Psoas muscle (tissue), 8 donors: ENCODE measurements at regions of chr3 and their contacts with region 1.

Region 1: DNA sequence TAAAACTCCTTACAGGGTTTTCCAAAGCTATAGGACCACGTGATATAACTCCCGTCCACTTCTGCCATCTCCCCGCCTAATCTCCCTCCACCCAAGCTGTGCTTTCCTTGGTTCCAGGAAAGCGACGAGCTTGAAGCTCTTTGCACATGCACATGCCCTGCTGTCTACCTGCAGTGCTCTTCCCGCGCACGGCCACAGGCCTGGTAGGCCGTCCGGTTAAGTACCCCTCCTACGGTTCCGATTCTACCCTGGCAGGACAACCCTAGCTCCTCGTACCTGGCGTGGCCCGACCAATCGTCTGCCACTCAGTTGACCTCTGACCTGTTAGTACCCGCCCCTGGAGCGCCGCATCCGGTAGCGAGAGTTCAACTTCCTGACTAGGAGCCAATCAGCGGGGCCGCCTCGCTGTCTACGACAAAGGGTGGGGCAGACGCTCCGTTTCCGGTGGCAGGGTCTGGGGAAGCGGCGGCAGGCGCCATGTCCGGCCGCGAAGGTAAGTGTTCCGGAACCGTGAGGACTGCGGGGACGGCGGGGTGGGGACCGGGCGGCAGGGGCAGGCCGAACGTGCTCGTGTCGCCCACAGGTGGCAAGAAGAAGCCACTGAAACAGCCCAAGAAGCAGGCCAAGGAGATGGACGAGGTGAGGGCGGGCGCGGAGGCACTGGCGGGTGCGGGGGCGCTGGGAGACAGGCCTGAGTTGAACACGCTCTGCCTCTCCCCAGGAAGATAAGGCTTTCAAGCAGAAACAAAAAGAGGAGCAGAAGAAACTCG is at the starts of genes CCDC51 and TMA7:
- DNase-seq: peak; percentile 98 to 99
- ATAC-seq: peak; percentile 97 to 100 (median 98)
- H3K4me3 ChIP-seq: peak within 1 kb of the TSS; percentile 89
- H3K27ac ChIP-seq: peak within 1 kb of the TSS; percentile 92
- H3K4me1 ChIP-seq: peaks cover 23% of the 10 kb centered on the region
- H3K27me3 ChIP-seq: no peaks in the 10 kb centered on the region
- CTCF ChIP-seq: no peak
- total RNA-seq, gene CCDC51: 5.3 to 9.5 (median 5.4) TPM
- total RNA-seq, gene TMA7: 156 to 218 (median 185) TPM

Region 2: DNA sequence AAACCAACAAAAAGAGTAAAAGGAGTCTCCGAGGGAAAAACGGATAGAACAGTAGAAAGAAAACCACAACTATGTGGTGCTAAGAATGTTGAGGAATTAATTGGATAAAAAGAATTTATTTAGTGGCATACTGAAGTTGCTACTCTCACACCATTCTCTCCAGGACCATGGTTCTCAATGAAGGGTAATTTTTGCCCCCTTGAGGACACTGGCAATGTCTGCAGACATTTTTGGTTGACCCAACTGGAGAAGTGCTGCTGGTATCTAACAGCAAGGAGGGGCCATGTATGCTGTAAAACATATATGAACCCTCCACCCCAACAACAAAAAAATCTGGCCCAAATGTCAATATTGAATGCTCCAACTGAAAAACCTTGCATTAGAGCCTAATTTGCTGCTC is 775.5 kb before region 1 on chr3:
- intact Hi-C with region 1: no loop called
- DNase-seq: no peak
- ATAC-seq: no peak
- H3K4me3 ChIP-seq: no peak overlapping the region
- H3K27ac ChIP-seq: no peak overlapping the region
- H3K4me1 ChIP-seq: peaks cover 12% of the 10 kb centered on the region
- H3K27me3 ChIP-seq: no peaks in the 10 kb centered on the region
- CTCF ChIP-seq: peak; percentile 6

Region 3: GRCh38 chr3:48194446-48195071 is 245.4 kb before region 1 on chr3:
- intact Hi-C with region 1: loop called in 1 of 2 experiments (anchors 5 kb)
- DNase-seq: peak in 1 of 2 donors; percentile 36
- ATAC-seq: peak in 3 of 4 donors; percentile 59
- H3K4me3 ChIP-seq: no peak overlapping the region
- H3K27ac ChIP-seq: no peak overlapping the region
- H3K4me1 ChIP-seq: no peaks in the 10 kb centered on the region
- H3K27me3 ChIP-seq: no peaks in the 10 kb centered on the region
- CTCF ChIP-seq: peak; percentile 45

Region 4: GRCh38 chr3:48273594-48274211 is 166.3 kb before region 1 on chr3:
- intact Hi-C with region 1: loop called (anchors 1 to 2 kb)
- DNase-seq: no peak
- ATAC-seq: peak; percentile 51 to 84 (median 70)
- H3K4me3 ChIP-seq: no peak overlapping the region
- H3K27ac ChIP-seq: no peak overlapping the region
- H3K4me1 ChIP-seq: no peaks in the 10 kb centered on the region
- H3K27me3 ChIP-seq: no peaks in the 10 kb centered on the region
- CTCF ChIP-seq: peak; percentile 75

Region 5: GRCh38 chr3:48804930-48805329 is 364.9 kb after region 1 on chr3:
- intact Hi-C with region 1: no loop called
- DNase-seq: no peak
- ATAC-seq: no peak
- H3K4me3 ChIP-seq: no peak overlapping the region
- H3K27ac ChIP-seq: no peak overlapping the region
- H3K4me1 ChIP-seq: peaks cover 8% of the 10 kb centered on the region
- H3K27me3 ChIP-seq: no peaks in the 10 kb centered on the region
- CTCF ChIP-seq: no peak